ENCODE measurements at regions of chr11 and their contacts with region 1.

Region 1: DNA sequence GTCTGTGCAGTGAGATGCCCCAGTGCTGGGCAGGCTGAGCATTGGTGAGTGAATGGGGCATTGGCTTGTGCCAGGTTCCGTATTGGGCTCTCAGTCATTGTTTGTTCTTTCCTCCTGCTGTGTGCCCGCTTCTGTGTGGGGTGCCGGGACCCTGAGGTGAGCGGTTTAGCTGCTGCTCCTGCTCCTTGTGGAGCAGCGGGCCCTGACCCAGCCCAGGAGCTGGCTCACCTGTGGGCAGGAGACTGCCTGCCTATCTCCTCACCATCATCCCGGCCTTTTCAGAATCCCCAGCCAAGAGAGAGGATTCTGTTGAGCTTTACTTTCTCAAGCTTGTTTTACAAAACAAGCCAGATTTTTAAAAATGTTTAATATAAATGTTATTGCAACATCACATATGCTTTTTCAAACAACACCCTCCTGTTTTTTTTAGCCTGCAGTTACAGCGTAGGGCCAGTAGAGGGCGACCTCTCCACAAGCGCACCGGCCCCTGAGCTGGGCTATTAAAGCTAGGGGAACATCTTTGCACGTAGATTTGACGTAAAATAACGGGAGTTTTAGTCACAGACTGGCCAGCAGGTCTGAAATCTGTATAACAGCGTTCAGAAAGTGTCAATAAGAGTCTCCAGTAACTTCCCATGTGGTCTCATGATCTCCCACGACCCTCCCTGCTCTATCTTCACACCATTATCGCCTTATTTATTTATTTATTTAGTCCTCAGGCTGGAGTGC is 25.1 kb upstream of the RELT start:
- DNase-seq: peak; percentile 89
- CTCF ChIP-seq: peak; percentile 90

Region 2: GRCh38 chr11:73072901-73073481 is 278.1 kb before region 1 on chr11:
- in situ Hi-C with region 1: no loop called
- DNase-seq: peak; percentile 46
- CTCF ChIP-seq: no peak

Region 3: GRCh38 chr11:73652046-73652730 is 301.1 kb after region 1 on chr11:
- in situ Hi-C with region 1: loop called (anchors 10 kb)
- DNase-seq: no peak
- CTCF ChIP-seq: no peak

Measured in GM13976 (cell line).